ENCODE measurements at regions of chr17 and their contacts with region 1.

Region 1: GRCh38 chr17:8894673-8895578 is 27.5 kb upstream of the PIK3R6 start:
- DNase-seq: peak; percentile 55
- H3K4me3 ChIP-seq: no peak overlapping the region
- H3K27ac ChIP-seq: no peak overlapping the region
- H3K4me1 ChIP-seq: no peaks in the 10 kb centered on the region
- H3K27me3 ChIP-seq: no peaks in the 10 kb centered on the region
- CTCF ChIP-seq: peak; percentile 76 to 80

Region 2: DNA sequence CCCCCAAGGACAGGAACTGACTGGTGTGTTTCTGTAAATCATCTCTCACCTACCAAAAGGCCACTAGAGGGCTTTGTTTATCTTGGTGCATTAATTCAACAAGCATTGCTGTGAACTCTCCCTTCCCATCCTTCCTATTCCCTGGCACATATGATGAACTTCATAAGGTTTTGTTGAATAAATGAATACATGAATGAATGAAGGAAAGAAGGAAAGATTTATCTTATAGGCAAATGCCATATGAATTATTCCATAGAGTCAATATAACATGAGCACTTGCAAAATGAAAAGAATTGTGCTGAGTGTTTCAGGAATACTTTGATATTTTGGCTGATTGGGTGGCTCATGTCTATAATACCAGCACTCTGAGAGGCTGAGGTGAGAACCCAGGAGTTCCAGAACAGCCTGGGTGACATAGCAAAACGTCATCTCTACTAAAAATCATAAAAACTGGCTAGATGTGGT is 140.9 kb before region 1 on chr17:
- CTCF ChIA-PET with region 1: no interaction called
- dilution Hi-C with region 1: no loop called
- in situ Hi-C with region 1: loop called in 1 of 2 experiments (anchors 10 kb)
- intact Hi-C with region 1: loop called (anchors 1 kb)
- DNase-seq: peak; percentile 20
- H3K4me3 ChIP-seq: no peak overlapping the region
- H3K27ac ChIP-seq: no peak overlapping the region
- H3K4me1 ChIP-seq: no peaks in the 10 kb centered on the region
- H3K27me3 ChIP-seq: no peaks in the 10 kb centered on the region
- CTCF ChIP-seq: peak; percentile 56 to 65

Region 3: DNA sequence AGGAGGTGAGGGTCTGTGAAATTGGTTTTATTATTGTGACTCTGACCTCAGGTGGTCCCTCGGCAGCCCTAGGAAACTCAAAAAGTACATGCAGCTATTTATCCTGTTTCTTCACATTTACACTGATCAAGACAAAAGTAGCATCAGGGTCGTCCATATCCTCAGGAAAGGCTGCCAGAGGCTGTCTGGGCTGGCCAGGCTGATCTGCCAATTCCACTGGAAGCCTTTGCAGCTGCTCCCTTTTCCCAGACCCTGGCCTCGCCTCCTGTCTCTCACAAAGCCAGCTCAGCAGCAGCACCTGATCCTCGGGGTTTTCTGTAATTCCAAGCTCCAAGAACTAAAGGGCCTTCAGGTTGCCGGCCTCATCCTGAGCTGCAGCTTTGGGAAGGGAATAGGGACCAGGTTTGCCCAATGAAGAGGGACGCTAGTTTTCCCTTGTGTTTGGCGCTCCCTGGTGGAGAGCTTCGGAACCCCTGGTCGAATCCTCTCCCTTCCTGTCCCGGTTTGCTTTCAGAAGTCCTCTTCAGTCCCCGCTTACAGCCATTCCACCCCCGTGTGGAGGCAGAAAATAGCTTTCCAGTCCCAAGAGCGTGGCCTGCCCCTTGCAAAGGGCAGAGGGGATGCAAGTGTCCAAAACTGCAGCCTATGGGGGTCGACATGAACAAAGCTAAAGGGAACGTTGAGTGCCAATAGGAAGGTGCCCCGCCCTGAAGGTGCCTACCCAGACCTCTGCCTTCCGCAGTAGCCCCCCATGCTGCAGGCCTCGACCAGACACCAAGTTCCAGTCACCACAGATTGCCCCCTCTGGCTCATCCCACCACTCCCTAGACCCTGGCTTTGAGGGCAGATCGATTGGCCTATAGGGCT is 109.1 kb before region 1 on chr17:
- CTCF ChIA-PET with region 1: interaction called, 3 read pairs
- dilution Hi-C with region 1: no loop called
- in situ Hi-C with region 1: loop called in 1 of 2 experiments (anchors 10 kb)
- intact Hi-C with region 1: loop called (anchors 2 kb)
- DNase-seq: peak; percentile 45
- H3K4me3 ChIP-seq: no peak overlapping the region
- H3K27ac ChIP-seq: no peak overlapping the region
- H3K4me1 ChIP-seq: no peaks in the 10 kb centered on the region
- H3K27me3 ChIP-seq: no peaks in the 10 kb centered on the region
- CTCF ChIP-seq: peak; percentile 83 to 89

Region 4: GRCh38 chr17:8798846-8799569 is 95.9 kb before region 1 on chr17 and contains the start of gene MFSD6L:
- CTCF ChIA-PET with region 1: interaction called, 5 read pairs
- dilution Hi-C with region 1: no loop called
- in situ Hi-C with region 1: loop called in 1 of 2 experiments (anchors 10 kb)
- intact Hi-C with region 1: loop called (anchors 1 kb)
- DNase-seq: peak; percentile 17
- H3K4me3 ChIP-seq: no peak within 1 kb of the TSS
- H3K27ac ChIP-seq: no peak within 1 kb of the TSS
- H3K4me1 ChIP-seq: peaks cover 10% of the 10 kb centered on the region
- H3K27me3 ChIP-seq: peaks cover 4% of the 10 kb centered on the region
- CTCF ChIP-seq: peak; percentile 6 to 43
- total RNA-seq, gene MFSD6L: not detected

Region 5: GRCh38 chr17:8857919-8858318 is 37.0 kb before region 1 on chr17:
- CTCF ChIA-PET with region 1: no interaction called
- dilution Hi-C with region 1: loop called (anchors 5 kb)
- in situ Hi-C with region 1: no loop called
- intact Hi-C with region 1: no loop called
- DNase-seq: peak; percentile 87
- H3K4me3 ChIP-seq: no peak overlapping the region
- H3K27ac ChIP-seq: peak overlapping the region; percentile 18
- H3K4me1 ChIP-seq: peaks cover 43% of the 10 kb centered on the region
- H3K27me3 ChIP-seq: no peaks in the 10 kb centered on the region
- CTCF ChIP-seq: no peak

Region 6: DNA sequence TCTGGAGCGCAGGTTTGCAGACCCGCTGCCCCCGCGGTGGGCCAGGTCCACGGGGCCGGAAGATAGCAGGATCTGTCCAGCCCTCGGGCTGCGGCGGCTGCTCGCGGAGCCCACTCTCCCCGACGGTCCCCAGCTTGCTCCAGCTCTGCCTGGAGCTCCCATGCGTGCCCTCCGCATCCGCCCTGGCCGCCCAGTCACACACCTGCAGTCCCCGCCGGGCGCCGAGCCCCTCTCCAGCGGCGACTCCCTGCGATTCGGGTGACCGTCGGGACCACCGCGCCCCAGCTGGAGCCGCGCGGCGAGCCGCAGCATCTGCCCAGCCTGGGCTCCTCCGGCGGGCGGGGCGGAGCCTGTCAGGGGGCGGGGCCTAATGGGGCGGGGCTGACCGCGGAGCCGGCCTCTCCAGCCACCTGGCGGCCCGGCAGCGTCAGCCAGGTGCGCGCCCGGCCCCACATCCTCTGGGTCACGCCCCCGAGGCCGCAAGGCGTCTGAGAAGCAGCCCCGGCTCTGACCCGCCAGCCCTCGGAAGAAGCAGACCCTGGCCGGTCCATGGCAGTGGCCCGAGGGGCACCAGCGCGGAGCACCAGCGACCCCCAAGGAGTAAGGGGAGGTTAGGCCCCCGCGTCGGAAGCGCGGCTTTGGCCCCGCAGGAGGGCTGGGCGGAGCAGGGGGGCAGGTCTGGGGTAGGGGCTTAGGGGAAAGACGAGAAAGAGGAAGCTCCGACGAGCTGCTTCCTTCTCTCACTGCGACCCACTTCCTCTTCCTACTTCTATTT is 70.7 kb after region 1 on chr17 and contains the start of gene PIK3R5:
- CTCF ChIA-PET with region 1: no interaction called
- dilution Hi-C with region 1: no loop called
- in situ Hi-C with region 1: no loop called
- intact Hi-C with region 1: no loop called
- DNase-seq: peak; percentile 39
- H3K4me3 ChIP-seq: peak within 1 kb of the TSS; percentile 33 to 50 (median 48)
- H3K27ac ChIP-seq: no peak within 1 kb of the TSS
- H3K4me1 ChIP-seq: no peaks in the 10 kb centered on the region
- H3K27me3 ChIP-seq: peaks cover 5% of the 10 kb centered on the region
- CTCF ChIP-seq: peak in 1 of 2 donors; percentile 33
- total RNA-seq, gene PIK3R5: 0.71 TPM in 1 of 2 donors, not detected in the other

Region 7: GRCh38 chr17:9217151-9218056 is 322.5 kb after region 1 on chr17:
- CTCF ChIA-PET with region 1: no interaction called
- dilution Hi-C with region 1: no loop called
- in situ Hi-C with region 1: no loop called
- intact Hi-C with region 1: no loop called
- DNase-seq: peak; percentile 61
- H3K4me3 ChIP-seq: no peak overlapping the region
- H3K27ac ChIP-seq: no peak overlapping the region
- H3K4me1 ChIP-seq: no peaks in the 10 kb centered on the region
- H3K27me3 ChIP-seq: no peaks in the 10 kb centered on the region
- CTCF ChIP-seq: no peak

Measured in mammary epithelial cell (primary cell).